Colonic mucosa (tissue), 4 donors: ENCODE measurements at regions of chr16 and their contacts with region 1.

Region 1: DNA sequence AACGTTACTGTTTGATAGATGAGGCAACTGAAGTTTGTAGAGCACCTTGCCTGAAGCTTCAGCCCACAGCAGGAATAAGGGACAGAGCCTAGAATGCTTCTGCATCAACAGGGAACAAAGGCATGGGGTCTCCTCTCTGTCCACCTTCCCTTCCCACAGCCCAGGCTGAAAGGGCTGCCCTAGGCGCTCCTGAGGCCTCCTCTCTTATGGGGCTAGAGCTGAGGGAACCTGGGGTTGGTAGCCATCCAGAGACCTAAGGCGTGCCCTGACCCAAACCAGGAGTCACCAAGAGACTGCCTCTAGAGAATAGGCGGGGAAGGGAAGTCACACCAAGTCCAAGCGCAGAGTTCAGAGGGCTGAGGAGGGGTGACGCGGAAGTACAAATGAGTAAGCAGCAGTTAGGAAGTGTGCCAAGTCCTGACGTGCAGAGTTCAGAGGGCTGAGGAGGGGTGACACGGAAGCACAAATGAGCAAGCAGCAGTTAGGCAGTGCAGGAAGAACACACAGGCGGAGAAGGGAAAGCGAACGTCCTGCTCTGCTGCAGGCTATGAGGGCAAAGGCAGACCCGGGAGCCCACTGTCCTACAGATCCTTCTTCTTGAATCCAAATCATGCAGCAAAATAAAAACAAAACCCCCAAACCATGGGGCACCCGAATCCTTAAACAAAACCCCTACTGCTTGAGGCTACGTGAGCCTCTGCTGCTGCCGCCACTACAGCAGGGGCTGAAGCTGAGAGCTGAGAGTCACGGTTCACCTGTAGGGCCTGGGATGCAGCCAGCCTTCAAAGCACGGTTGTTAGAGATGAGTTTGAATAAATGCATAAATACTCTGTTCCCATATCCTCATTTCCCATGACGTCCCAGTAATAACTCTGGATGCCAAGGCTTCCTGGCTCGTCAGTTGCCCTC is 2.7 kb upstream of the SPG7 start:
- DNase-seq: peak; percentile 98
- H3K4me3 ChIP-seq: no peak overlapping the region
- H3K27ac ChIP-seq: peak overlapping the region; percentile 91
- H3K4me1 ChIP-seq: peaks cover 19% of the 10 kb centered on the region
- H3K27me3 ChIP-seq: no peaks in the 10 kb centered on the region
- CTCF ChIP-seq: no peak

Region 2: GRCh38 chr16:89341697-89342694 is 163.5 kb before region 1 on chr16:
- intact Hi-C with region 1: no loop called
- DNase-seq: no peak
- H3K4me3 ChIP-seq: no peak overlapping the region
- H3K27ac ChIP-seq: no peak overlapping the region
- H3K4me1 ChIP-seq: peaks cover 25% of the 10 kb centered on the region
- H3K27me3 ChIP-seq: no peaks in the 10 kb centered on the region
- CTCF ChIP-seq: no peak

Region 3: GRCh38 chr16:89442990-89443731 is 62.3 kb before region 1 on chr16:
- intact Hi-C with region 1: no loop called
- DNase-seq: peak; percentile 82
- H3K4me3 ChIP-seq: no peak overlapping the region
- H3K27ac ChIP-seq: no peak overlapping the region
- H3K4me1 ChIP-seq: peaks cover 36% of the 10 kb centered on the region
- H3K27me3 ChIP-seq: no peaks in the 10 kb centered on the region
- CTCF ChIP-seq: no peak

Region 4: GRCh38 chr16:89490387-89491237 is 14.8 kb before region 1 on chr16 and contains the start of gene ANKRD11:
- intact Hi-C with region 1: loop called (anchors 2 kb)
- DNase-seq: peak; percentile 99
- H3K4me3 ChIP-seq: peak within 1 kb of the TSS; percentile 95
- H3K27ac ChIP-seq: peak within 1 kb of the TSS; percentile 91
- H3K4me1 ChIP-seq: peaks cover 18% of the 10 kb centered on the region
- H3K27me3 ChIP-seq: no peaks in the 10 kb centered on the region
- CTCF ChIP-seq: no peak
- total RNA-seq, gene ANKRD11: 69.4 to 129 TPM